Activated CD4-positive, alpha-beta memory T cell treated with anti-CD3 and anti-CD28 coated beads, Interleukin-2, amount 10 ng/mL, durations not matched to agents 7 days and 5 days (primary cell): ENCODE measurements at regions of chr2 and their contacts with region 1.

Region 1: GRCh38 chr2:28423856-28424605 is 31.4 kb downstream of the FOSL2 start:
- DNase-seq: peak; percentile 57
- H3K4me3 Mint-ChIP-seq: peak overlapping the region; percentile 43
- H3K27ac Mint-ChIP-seq: peak overlapping the region; percentile 93
- H3K4me1 Mint-ChIP-seq: peaks cover 69% of the 10 kb centered on the region
- H3K27me3 Mint-ChIP-seq: no peaks in the 10 kb centered on the region

Region 2: GRCh38 chr2:28413142-28413898 is 10.7 kb before region 1 on chr2:
- CTCF ChIA-PET with region 1: interaction called, 10 read pairs
- POLR2A ChIA-PET with region 1: interaction called, 29 read pairs
- DNase-seq: no peak
- H3K4me3 Mint-ChIP-seq: no peak overlapping the region
- H3K27ac Mint-ChIP-seq: peak overlapping the region; percentile 45
- H3K4me1 Mint-ChIP-seq: peaks cover 57% of the 10 kb centered on the region
- H3K27me3 Mint-ChIP-seq: no peaks in the 10 kb centered on the region